Activated B cell treated with CpG ODN at 0.5 μM for 24 hours (primary cell): ENCODE measurements at regions of chr2 and their contacts with region 1.

Region 1: DNA sequence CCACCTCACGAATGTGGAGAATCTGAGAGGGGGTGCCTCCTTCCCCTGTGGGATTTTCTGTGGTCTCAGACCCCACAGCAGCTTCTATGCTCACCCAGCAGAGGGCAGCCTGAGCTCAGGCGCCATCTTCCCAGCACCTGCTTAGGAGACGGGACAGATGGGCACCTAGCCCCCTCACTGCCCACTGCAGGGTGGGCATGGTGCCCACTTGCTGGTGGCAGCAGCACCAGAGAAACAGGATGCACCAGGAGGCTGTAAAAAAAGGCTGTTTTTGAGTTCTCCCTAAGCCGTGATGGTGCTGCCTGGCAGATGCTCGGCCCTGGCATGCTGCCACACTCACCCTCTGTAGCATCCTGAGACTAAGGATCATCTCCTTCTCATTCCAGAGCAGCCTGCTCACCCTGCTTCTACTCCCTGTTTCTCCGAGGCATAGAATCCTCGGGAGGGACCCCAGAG is 19.1 kb upstream of the SLC20A1 start:
- DNase-seq: peak; percentile 55
- ATAC-seq: peak; percentile 85
- H3K4me3 Mint-ChIP-seq: peak overlapping the region; percentile 44
- H3K27ac Mint-ChIP-seq: no peak overlapping the region
- H3K4me1 Mint-ChIP-seq: peaks cover 30% of the 10 kb centered on the region
- H3K27me3 Mint-ChIP-seq: no peaks in the 10 kb centered on the region
- CTCF ChIP-seq: peak; percentile 25

Region 2: GRCh38 chr2:112692496-112692911 is 65.9 kb after region 1 on chr2:
- CTCF ChIA-PET with region 1: interaction called, 34 read pairs
- POLR2A ChIA-PET with region 1: interaction called, 5 read pairs
- intact Hi-C with region 1: loop called (anchors 1 kb)
- DNase-seq: no peak
- ATAC-seq: peak; percentile 43
- H3K4me3 Mint-ChIP-seq: no peak overlapping the region
- H3K27ac Mint-ChIP-seq: peak overlapping the region; percentile 37
- H3K4me1 Mint-ChIP-seq: peaks cover 17% of the 10 kb centered on the region
- H3K27me3 Mint-ChIP-seq: no peaks in the 10 kb centered on the region
- CTCF ChIP-seq: no peak

Region 3: GRCh38 chr2:112726497-112727190 is 100.0 kb after region 1 on chr2:
- CTCF ChIA-PET with region 1: interaction called, 316 read pairs
- POLR2A ChIA-PET with region 1: interaction called, 38 read pairs
- intact Hi-C with region 1: loop called (anchors 1 kb)
- DNase-seq: peak; percentile 83
- ATAC-seq: peak; percentile 91
- H3K4me3 Mint-ChIP-seq: peak overlapping the region; percentile 32
- H3K27ac Mint-ChIP-seq: peak overlapping the region; percentile 66
- H3K4me1 Mint-ChIP-seq: peaks cover 20% of the 10 kb centered on the region
- H3K27me3 Mint-ChIP-seq: no peaks in the 10 kb centered on the region
- CTCF ChIP-seq: peak; percentile 75

Region 4: GRCh38 chr2:112884869-112885505 is 258.4 kb after region 1 on chr2:
- CTCF ChIA-PET with region 1: interaction called, 6 read pairs
- POLR2A ChIA-PET with region 1: no interaction called
- intact Hi-C with region 1: loop called (anchors 1 kb)
- DNase-seq: peak; percentile 52
- ATAC-seq: peak; percentile 58
- H3K4me3 Mint-ChIP-seq: no peak overlapping the region
- H3K27ac Mint-ChIP-seq: no peak overlapping the region
- H3K4me1 Mint-ChIP-seq: peaks cover 23% of the 10 kb centered on the region
- H3K27me3 Mint-ChIP-seq: no peaks in the 10 kb centered on the region
- CTCF ChIP-seq: peak; percentile 36

Region 5: GRCh38 chr2:112958428-112959108 is 331.9 kb after region 1 on chr2:
- CTCF ChIA-PET with region 1: no interaction called
- POLR2A ChIA-PET with region 1: no interaction called
- intact Hi-C with region 1: loop called (anchors 5 kb)
- DNase-seq: no peak
- ATAC-seq: peak; percentile 82
- H3K4me3 Mint-ChIP-seq: no peak overlapping the region
- H3K27ac Mint-ChIP-seq: no peak overlapping the region
- H3K4me1 Mint-ChIP-seq: no peaks in the 10 kb centered on the region
- H3K27me3 Mint-ChIP-seq: no peaks in the 10 kb centered on the region
- CTCF ChIP-seq: no peak